Dorsolateral prefrontal cortex (tissue), 120 donors: ENCODE measurements at regions of chr19 and their contacts with region 1.

Region 1: DNA sequence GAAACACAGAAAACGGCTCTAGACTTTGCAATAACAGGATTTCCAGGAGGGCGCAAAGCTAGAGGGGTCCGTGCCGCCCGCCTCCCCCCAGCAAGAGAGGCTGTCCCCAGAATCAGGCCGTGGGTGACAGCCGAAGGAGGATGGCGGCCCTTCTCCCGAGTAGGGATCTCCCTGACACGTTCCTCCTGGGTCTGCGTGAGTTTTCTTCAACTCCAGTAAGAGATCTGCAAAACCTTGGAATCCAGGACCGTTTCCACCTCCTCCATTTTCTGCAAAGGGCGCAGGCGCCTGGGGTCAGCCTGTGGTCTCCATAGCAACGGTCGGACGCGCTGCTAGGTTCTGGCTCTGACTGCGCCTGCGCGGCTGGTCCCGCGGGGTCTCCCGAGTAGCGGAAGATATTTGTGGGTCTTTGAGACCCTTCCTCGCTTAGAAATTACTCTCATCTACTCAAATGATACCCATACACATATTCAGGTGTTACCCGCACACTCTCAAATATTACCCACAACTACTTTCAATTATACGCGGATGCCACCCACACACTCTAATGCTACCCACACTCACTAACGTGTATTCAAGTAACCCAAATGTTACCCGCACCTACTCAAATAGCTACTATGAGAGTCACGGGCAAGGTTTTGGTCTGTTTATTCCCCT is 2.1 kb downstream of the PNMA8C start:
- DNase-seq: peak; percentile 72 to 87 (median 82)
- H3K4me3 ChIP-seq: peak overlapping the region; percentile 44 to 88 (median 76)
- H3K27ac ChIP-seq: peak overlapping the region in 39 of 59 donors; percentile 9 to 89 (median 62)
- H3K27me3 ChIP-seq: no peaks in the 10 kb centered on the region
- CTCF ChIP-seq: peak in 4 of 56 donors; percentile 12 to 27 (median 15)

Region 2: DNA sequence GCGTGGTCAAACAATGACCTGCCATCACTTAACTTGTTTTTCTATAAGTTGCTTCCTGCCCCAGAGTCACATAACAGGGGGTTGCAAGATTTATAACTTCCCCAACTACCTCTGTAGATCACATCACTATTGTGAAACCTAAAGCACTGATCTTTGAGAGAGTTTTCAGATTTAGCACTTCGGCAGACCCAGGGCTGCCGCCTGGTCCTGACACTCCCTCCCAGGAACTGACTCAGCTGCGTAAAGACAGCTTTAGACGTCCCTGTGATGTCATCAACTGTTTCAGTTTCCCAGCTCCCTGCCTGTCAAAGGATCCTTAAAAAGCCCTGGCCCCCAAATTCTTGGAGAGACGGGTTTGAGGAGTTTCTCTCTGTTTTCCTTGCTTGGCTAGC is 245.2 kb before region 1 on chr19:
- intact Hi-C with region 1: no loop called
- DNase-seq: no peak
- H3K4me3 ChIP-seq: no peak overlapping the region
- H3K27ac ChIP-seq: no peak overlapping the region
- H3K27me3 ChIP-seq: no peaks in the 10 kb centered on the region
- CTCF ChIP-seq: no peak

Region 3: DNA sequence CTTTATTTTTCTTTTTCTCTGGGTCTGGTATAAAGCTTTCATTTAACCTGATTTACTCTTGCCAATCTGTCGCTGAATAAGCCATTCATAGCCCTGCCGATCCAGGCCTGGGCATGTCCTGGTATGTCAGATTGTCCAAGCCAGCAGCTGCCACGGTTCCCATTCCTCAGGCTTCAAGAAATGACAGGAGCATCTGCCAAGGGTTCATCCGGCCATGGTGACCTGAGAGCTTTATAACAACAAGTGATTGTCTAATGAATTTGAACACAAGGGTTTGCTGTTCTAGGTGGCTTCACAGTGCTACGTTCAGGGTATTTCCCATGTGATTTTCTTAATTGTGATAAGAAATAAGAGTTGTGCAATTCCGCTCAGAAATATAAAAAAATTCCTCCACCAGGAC is 24.7 kb after region 1 on chr19:
- intact Hi-C with region 1: no loop called
- DNase-seq: no peak
- H3K4me3 ChIP-seq: peak overlapping the region in 2 of 59 donors; percentile 10 to 17
- H3K27ac ChIP-seq: peak overlapping the region in 48 of 59 donors; percentile 1 to 78 (median 54)
- H3K27me3 ChIP-seq: no peaks in the 10 kb centered on the region
- CTCF ChIP-seq: peak in 1 of 56 donors; percentile 11

Region 4: DNA sequence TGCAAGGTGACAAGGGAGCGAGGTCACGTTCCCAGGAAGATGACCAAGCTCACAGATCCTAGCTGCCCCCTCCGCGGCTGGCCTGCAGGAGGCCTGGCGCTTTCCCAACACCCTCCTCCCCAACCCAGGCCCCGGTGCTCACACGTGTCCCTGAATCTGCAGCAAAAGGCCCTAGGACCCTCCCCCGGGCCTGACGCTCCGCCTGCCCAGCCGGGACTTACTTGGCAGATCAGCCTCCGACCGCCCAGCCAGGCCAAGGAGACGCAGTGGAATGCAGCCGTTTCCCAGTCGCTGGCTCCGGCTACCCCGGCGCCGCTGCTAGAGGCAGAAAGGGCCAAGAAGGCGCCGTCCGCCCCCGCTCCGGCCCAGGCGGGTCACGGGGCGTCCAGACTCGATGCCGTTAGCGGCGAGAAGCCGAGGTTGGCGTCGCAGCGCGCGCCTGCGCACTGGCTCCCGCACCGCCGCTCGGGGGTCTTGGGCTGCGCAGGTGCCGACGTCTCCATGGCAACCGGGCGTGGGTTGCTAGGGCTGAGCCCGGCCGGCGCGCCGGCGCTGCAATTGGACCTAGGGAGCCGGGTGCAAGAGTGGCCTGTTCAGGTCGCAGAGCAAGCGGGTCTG is 44.6 kb after region 1 on chr19 and contains the start of gene PNMA8A:
- intact Hi-C with region 1: loop called (anchors 5 kb)
- DNase-seq: peak; percentile 53 to 88 (median 80)
- H3K4me3 ChIP-seq: peak within 1 kb of the TSS; percentile 56 to 91 (median 76)
- H3K27ac ChIP-seq: peak within 1 kb of the TSS; percentile 39 to 96 (median 88)
- H3K27me3 ChIP-seq: no peaks in the 10 kb centered on the region
- CTCF ChIP-seq: peak in 10 of 56 donors; percentile 4 to 26 (median 13)
- total RNA-seq, gene PNMA8A: 46.6 to 225 (median 143) TPM